Upper lobe of right lung (tissue), 1 donor: ENCODE measurements at regions of chr6 and their contacts with region 1.

Region 1: DNA sequence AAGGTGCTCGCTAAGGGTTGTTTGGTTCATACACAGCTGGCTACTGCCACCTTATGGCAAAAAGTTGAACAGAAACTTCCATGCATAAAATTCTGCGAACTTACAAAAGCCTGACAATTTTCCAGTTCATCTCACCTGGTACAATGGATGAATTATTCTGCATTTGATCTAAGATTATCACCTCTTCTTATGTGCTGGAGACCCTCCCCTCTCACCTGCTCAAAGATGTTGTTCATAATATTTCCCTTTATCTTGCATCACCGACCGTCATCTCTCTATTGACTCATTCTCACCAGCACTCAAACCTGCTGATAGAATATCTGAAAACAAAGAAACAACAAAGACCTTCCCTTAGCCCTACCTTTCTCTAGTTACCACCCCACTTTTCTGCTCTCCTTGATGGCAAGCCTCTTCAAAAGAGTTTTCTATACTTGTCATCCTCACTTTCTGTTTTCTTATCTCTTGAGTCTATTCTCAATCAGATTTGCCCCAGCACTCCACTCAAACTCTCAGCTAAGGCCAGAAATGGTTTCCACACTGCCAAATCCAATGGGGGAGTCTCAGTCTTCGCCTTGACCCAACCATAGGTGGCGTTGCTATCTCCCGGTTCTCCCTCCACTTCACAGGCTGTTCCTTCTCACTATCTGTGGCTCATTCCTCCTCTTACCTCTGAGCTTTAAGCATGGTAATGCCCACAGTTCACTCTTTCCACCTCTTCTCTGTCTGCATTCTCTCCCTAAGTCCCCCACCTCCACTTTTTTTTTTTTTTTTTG is 25.8 kb downstream of the SNRNP48 start:
- DNase-seq: no peak
- ATAC-seq: peak; percentile 45
- H3K4me3 ChIP-seq: no peak overlapping the region
- H3K27ac ChIP-seq: no peak overlapping the region
- H3K4me1 ChIP-seq: peaks cover 4% of the 10 kb centered on the region
- H3K27me3 ChIP-seq: no peaks in the 10 kb centered on the region
- CTCF ChIP-seq: peak; percentile 83

Region 2: GRCh38 chr6:7282097-7282906 is 333.5 kb before region 1 on chr6:
- intact Hi-C with region 1: loop called (anchors 10 kb)
- DNase-seq: no peak
- ATAC-seq: no peak
- H3K4me3 ChIP-seq: no peak overlapping the region
- H3K27ac ChIP-seq: no peak overlapping the region
- H3K4me1 ChIP-seq: no peaks in the 10 kb centered on the region
- H3K27me3 ChIP-seq: no peaks in the 10 kb centered on the region
- CTCF ChIP-seq: no peak